MCF 10A (cell line): ENCODE measurements at regions of chr6 and their contacts with region 1.

Region 1: GRCh38 chr6:39309942-39310531 is 4.2 kb downstream of the KCNK17 start:
- DNase-seq: peak; percentile 78
- H3K4me3 Mint-ChIP-seq: no peak overlapping the region
- H3K27ac Mint-ChIP-seq: no peak overlapping the region
- H3K4me1 Mint-ChIP-seq: no peaks in the 10 kb centered on the region
- H3K27me3 Mint-ChIP-seq: peaks cover 14% of the 10 kb centered on the region
- CTCF ChIP-seq: peak; percentile 95

Region 2: GRCh38 chr6:38973178-38974054 is 336.6 kb before region 1 on chr6:
- CTCF ChIA-PET with region 1: interaction called, 70 read pairs
- POLR2A ChIA-PET with region 1: no interaction called
- intact Hi-C with region 1: loop called (anchors 1 kb)
- DNase-seq: peak; percentile 67
- H3K4me3 Mint-ChIP-seq: no peak overlapping the region
- H3K27ac Mint-ChIP-seq: no peak overlapping the region
- H3K4me1 Mint-ChIP-seq: peaks cover 5% of the 10 kb centered on the region
- H3K27me3 Mint-ChIP-seq: peaks cover 72% of the 10 kb centered on the region
- CTCF ChIP-seq: peak; percentile 76

Region 3: DNA sequence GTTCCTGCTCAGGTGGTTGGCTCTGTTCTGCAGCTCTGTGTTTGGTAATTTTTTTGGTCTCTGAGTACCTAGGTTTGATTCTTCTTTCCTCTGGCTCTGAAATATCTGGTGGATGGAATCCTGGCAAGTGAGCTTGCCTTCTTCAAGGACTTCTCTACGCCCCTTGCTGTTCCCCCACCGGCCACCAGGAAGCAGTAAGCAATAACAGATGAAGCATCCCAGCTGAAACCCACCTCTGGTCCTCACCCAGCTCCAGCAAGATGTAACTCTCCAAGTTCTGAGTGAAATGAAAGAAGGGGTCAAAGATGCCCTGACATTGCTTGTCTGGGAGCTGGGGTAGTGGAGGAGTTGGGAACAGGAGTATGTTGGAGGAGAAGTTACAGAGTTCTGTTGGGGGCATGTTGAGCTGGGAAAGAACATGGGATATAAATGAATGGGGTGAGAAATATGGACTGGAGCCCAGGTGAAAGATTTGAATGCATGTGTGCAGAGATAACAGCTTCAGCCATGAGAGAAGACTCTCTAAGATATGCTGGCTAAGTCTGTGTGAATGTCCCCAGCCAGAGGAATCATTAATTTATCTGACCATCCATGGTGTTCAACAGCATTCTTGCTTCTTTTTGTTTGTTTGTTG is 312.8 kb before region 1 on chr6:
- CTCF ChIA-PET with region 1: interaction called, 13 read pairs
- POLR2A ChIA-PET with region 1: no interaction called
- intact Hi-C with region 1: no loop called
- DNase-seq: peak; percentile 30
- H3K4me3 Mint-ChIP-seq: no peak overlapping the region
- H3K27ac Mint-ChIP-seq: no peak overlapping the region
- H3K4me1 Mint-ChIP-seq: no peaks in the 10 kb centered on the region
- H3K27me3 Mint-ChIP-seq: peaks cover 39% of the 10 kb centered on the region
- CTCF ChIP-seq: peak; percentile 29

Region 4: GRCh38 chr6:39153766-39154397 is 156.2 kb before region 1 on chr6:
- CTCF ChIA-PET with region 1: interaction called, 12 read pairs
- POLR2A ChIA-PET with region 1: interaction called, 4 read pairs
- intact Hi-C with region 1: no loop called
- DNase-seq: no peak
- H3K4me3 Mint-ChIP-seq: no peak overlapping the region
- H3K27ac Mint-ChIP-seq: no peak overlapping the region
- H3K4me1 Mint-ChIP-seq: no peaks in the 10 kb centered on the region
- H3K27me3 Mint-ChIP-seq: peaks cover 43% of the 10 kb centered on the region
- CTCF ChIP-seq: no peak

Region 5: GRCh38 chr6:39322306-39322850 is 12.3 kb after region 1 on chr6 and contains the start of gene KCNK16:
- CTCF ChIA-PET with region 1: interaction called, 17 read pairs
- POLR2A ChIA-PET with region 1: no interaction called
- intact Hi-C with region 1: no loop called
- DNase-seq: no peak
- H3K4me3 Mint-ChIP-seq: no peak within 1 kb of the TSS
- H3K27ac Mint-ChIP-seq: no peak within 1 kb of the TSS
- H3K4me1 Mint-ChIP-seq: no peaks in the 10 kb centered on the region
- H3K27me3 Mint-ChIP-seq: peaks cover 48% of the 10 kb centered on the region
- CTCF ChIP-seq: no peak
- total RNA-seq, gene KCNK16: not detected in 2 replicates

Region 6: DNA sequence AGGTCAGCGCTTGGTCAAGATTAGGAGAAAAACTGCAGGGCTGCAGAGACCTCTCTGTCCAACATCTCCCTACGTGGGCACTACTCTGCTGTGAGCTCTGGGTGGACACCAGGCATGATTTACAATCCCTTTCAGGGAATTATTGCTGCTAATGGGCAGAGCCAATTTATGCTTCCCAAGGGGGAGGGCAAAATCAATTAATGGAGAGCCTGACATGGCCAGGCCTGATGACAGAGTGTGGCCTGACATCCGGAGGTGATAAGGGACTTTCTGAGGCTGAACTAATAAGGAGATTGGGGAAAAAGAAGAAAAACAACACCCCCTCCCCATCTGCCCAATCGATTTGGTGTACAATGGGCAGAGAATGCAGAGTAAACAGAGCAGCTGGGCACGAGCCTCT is 17.5 kb after region 1 on chr6:
- CTCF ChIA-PET with region 1: interaction called, 17 read pairs
- POLR2A ChIA-PET with region 1: no interaction called
- intact Hi-C with region 1: no loop called
- DNase-seq: no peak
- H3K4me3 Mint-ChIP-seq: no peak overlapping the region
- H3K27ac Mint-ChIP-seq: no peak overlapping the region
- H3K4me1 Mint-ChIP-seq: no peaks in the 10 kb centered on the region
- H3K27me3 Mint-ChIP-seq: peaks cover 54% of the 10 kb centered on the region
- CTCF ChIP-seq: no peak

Region 7: DNA sequence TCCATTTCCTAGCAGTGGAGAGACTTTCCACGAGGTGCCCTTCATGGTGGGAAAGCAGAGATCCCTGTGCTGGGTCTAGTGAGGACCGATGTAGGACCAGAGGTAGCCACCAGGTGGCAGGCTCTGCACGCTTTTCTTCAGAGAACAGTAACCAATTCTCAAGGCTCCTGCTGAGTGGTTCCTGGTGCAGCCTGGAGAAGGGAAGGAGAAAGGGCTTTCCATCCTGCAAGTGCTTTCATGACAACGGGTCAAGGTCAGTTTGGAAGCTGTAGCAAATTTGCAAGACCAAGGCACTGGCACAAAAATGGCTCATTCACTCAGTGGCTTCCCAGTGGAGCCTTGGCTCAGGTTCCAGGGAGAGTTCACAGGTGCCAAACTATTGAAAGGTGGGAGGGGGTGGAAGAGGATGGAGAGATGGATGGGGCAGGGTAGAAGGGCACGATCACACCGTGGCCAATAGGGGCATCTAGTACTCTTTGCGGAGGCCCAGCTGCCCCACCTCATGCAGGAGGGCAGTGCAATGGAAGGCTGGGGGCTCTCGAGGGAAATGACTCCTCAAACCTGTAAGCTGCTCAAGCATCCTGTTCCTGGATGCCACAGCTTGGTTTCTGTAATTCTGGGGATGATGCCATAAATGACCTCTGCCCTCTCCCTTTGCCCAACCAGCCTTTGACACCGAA is 38.0 kb after region 1 on chr6:
- CTCF ChIA-PET with region 1: no interaction called
- POLR2A ChIA-PET with region 1: no interaction called
- intact Hi-C with region 1: no loop called
- DNase-seq: peak; percentile 62
- H3K4me3 Mint-ChIP-seq: no peak overlapping the region
- H3K27ac Mint-ChIP-seq: no peak overlapping the region
- H3K4me1 Mint-ChIP-seq: no peaks in the 10 kb centered on the region
- H3K27me3 Mint-ChIP-seq: no peaks in the 10 kb centered on the region
- CTCF ChIP-seq: peak; percentile 91

Region 8: DNA sequence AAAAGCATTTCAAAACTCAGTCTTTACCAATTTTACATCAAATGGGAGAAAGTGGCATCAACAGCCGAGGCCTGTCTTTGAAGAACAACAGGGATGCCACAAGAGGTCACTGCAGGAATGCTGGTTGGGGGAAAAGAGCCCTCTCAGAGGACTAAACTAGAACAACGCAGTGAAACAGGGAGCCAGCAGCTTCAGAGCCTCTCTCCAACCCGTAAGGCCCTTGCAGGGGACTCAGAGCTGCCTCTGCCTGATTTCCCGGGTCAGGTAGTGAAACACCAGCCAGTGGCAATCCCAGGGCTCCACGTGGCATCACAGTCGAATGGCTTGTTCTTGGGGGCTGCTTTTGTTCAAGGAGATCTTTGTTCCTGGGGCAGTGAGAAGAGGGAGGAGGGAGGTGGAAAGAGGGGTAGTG is 67.5 kb after region 1 on chr6:
- CTCF ChIA-PET with region 1: no interaction called
- POLR2A ChIA-PET with region 1: no interaction called
- intact Hi-C with region 1: no loop called
- DNase-seq: peak; percentile 73
- H3K4me3 Mint-ChIP-seq: no peak overlapping the region
- H3K27ac Mint-ChIP-seq: no peak overlapping the region
- H3K4me1 Mint-ChIP-seq: peaks cover 5% of the 10 kb centered on the region
- H3K27me3 Mint-ChIP-seq: no peaks in the 10 kb centered on the region
- CTCF ChIP-seq: peak; percentile 86

Region 9: GRCh38 chr6:39389484-39389767 is 79.4 kb after region 1 on chr6:
- CTCF ChIA-PET with region 1: no interaction called
- POLR2A ChIA-PET with region 1: no interaction called
- intact Hi-C with region 1: no loop called
- DNase-seq: peak; percentile 17
- H3K4me3 Mint-ChIP-seq: no peak overlapping the region
- H3K27ac Mint-ChIP-seq: no peak overlapping the region
- H3K4me1 Mint-ChIP-seq: no peaks in the 10 kb centered on the region
- H3K27me3 Mint-ChIP-seq: no peaks in the 10 kb centered on the region
- CTCF ChIP-seq: no peak